ENCODE measurements at regions of chr10 and their contacts with region 1.

Region 1: GRCh38 chr10:95561182-95562075 is at the start of gene SORBS1:
- DNase-seq: peak; percentile 96 to 98 (median 98)
- ATAC-seq: peak; percentile 93 to 98 (median 96)
- H3K4me3 ChIP-seq: peak within 1 kb of the TSS; percentile 69 to 91 (median 69)
- H3K27ac ChIP-seq: peak within 1 kb of the TSS; percentile 95 to 97 (median 96)
- H3K4me1 ChIP-seq: peaks cover 0 to 21% (median 9%) of the 10 kb centered on the region in 4 donors
- H3K27me3 ChIP-seq: no peaks in the 10 kb centered on the region
- CTCF ChIP-seq: no peak
- POLR2A ChIP-seq: peak; percentile 99
- total RNA-seq, gene SORBS1: 56.4 to 97.9 (median 76.5) TPM

Region 2: GRCh38 chr10:95499482-95499989 is 61.9 kb before region 1 on chr10:
- intact Hi-C with region 1: loop called in 1 of 2 experiments (anchors 10 kb)
- DNase-seq: no peak
- ATAC-seq: peak; percentile 8 to 49 (median 30)
- H3K4me3 ChIP-seq: no peak overlapping the region
- H3K27ac ChIP-seq: peak overlapping the region; percentile 46 to 96 (median 78)
- H3K4me1 ChIP-seq: peaks cover 0 to 61% (median 25%) of the 10 kb centered on the region in 4 donors
- H3K27me3 ChIP-seq: no peaks in the 10 kb centered on the region
- CTCF ChIP-seq: no peak
- POLR2A ChIP-seq: no peak

Region 3: DNA sequence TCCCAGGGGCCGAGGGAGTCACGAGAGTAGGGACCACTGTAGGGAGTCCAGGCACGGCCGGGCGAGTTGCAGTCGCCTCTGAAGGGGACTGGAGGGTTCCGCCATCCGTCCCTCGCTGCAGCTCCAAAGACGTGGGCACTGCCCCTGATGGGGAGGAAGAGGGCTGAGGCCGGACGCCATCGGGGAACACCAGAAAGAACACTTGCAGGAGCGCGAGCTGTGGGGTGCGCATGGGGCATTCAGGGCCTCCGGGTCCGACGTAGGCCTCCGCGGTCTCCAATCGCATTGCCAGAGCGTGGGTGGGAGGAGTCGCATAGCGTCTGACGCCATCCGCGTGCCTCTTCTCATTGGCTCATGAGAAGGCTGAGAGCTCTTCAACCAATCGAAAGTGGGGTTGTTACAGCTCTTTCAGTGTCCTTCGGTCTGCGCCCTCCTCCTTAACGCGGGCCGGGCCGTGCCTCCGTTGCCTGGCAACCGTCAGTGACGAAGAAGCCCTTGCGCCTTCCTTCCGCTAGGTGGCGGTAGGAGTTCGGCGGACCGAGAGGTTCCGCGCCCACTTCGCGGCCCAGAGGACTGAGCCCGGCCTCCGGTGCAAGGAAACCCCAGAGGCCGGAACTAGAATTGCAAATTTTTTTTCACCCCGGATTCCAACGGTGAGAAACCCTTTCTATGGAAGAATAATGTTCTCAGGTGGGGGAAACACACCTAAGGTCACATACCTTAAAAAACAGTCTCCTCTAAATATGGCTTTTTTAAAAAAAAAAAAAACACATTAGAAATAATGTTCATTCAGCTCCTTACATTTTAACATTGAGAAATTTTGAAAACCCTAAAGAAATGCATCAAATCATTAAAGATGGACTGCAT is 132.5 kb after region 1 on chr10 and contains the start of gene TCTN3:
- intact Hi-C with region 1: no loop called
- DNase-seq: peak; percentile 96 to 98 (median 98)
- ATAC-seq: peak; percentile 98 to 100 (median 99)
- H3K4me3 ChIP-seq: peak within 1 kb of the TSS; percentile 64 to 92 (median 80)
- H3K27ac ChIP-seq: peak within 1 kb of the TSS; percentile 20 to 73 (median 70)
- H3K4me1 ChIP-seq: peaks cover 0 to 7% (median 2%) of the 10 kb centered on the region in 4 donors
- H3K27me3 ChIP-seq: no peaks in the 10 kb centered on the region
- CTCF ChIP-seq: peak; percentile 99 to 100 (median 100)
- POLR2A ChIP-seq: peak; percentile 63
- total RNA-seq, gene TCTN3: 15.5 to 24.3 (median 19.1) TPM